Activated T-helper 2 cell treated with anti-CD3 and anti-CD28 coated beads, Interferon-gamma antibody, Interleukin-2, Interleukin-4, amounts not matched to agents 10 μg/mL and 5 μg/mL and 100 μg/mL, durations not matched to agents 14 hours and 24 hours and 36 hours (primary cell): ENCODE measurements at regions of chr16 and their contacts with region 1.

Region 1: DNA sequence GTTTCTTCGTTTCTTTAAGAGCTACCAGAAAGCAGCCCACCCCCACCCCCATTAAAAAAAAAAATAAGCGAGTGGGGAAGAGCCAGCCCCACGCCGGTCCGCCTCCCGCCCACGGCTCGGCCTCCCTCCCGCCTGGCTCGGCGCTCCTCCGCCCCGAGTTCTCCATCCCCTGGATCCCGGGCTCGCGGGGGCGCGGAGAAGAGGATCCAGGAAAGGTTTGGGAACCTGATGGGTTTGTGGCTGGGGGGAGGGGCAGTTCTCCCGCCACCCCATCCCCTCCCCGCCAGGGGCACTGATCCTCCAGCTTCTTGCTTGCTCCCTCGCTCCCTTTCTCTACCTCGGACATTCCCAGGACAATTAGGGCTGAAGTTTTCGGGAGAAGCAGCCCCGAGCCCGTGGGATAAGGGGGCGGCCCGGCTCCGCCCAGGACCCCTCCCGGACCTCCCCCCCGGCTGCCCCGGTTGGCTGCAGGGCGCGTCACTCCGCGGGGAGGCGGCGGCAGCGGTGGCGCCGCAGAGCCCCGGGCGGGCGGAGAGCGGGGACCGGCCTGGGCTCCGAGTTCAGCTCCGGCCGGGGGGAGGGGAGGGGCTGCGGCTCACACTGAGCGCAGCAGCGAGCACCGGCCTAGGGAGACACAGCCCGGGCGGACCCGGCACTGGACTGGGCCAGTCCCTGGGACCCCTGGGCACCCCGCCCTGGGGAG is 1.0 kb upstream of the SALL1 start:
- DNase-seq: no peak
- H3K4me3 Mint-ChIP-seq: no peak overlapping the region
- H3K27ac Mint-ChIP-seq: no peak overlapping the region
- H3K4me1 Mint-ChIP-seq: no peaks in the 10 kb centered on the region
- H3K27me3 Mint-ChIP-seq: peaks cover 69% of the 10 kb centered on the region

Region 2: GRCh38 chr16:49275050-49275730 is 1876.9 kb before region 1 on chr16:
- intact Hi-C with region 1: loop called (anchors 5 kb)
- DNase-seq: no peak
- H3K4me3 Mint-ChIP-seq: no peak overlapping the region
- H3K27ac Mint-ChIP-seq: no peak overlapping the region
- H3K4me1 Mint-ChIP-seq: no peaks in the 10 kb centered on the region
- H3K27me3 Mint-ChIP-seq: peaks cover 67% of the 10 kb centered on the region

Region 3: DNA sequence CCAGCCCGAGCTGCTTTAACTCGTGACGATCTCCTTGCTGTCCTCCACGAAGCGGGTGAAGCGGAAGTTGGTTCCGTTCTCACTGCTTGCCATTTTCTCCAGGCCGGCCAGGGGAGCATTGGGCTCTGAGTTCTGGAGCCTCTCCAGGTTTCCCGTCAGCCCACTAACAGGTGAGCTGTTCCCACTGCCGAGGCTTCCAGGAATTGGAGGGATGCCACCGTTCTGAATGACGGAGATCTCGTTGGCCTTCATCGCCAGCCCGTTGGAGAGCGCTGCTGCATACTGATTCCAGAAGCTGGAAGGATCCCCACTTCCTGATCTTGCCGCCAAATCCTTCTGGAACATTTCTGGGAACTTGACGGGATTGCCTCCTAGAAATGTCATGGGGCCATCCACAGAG is 15.0 kb before region 1 on chr16:
- intact Hi-C with region 1: no loop called
- DNase-seq: no peak
- H3K4me3 Mint-ChIP-seq: no peak overlapping the region
- H3K27ac Mint-ChIP-seq: no peak overlapping the region
- H3K4me1 Mint-ChIP-seq: no peaks in the 10 kb centered on the region
- H3K27me3 Mint-ChIP-seq: peaks cover 26% of the 10 kb centered on the region

Region 4: DNA sequence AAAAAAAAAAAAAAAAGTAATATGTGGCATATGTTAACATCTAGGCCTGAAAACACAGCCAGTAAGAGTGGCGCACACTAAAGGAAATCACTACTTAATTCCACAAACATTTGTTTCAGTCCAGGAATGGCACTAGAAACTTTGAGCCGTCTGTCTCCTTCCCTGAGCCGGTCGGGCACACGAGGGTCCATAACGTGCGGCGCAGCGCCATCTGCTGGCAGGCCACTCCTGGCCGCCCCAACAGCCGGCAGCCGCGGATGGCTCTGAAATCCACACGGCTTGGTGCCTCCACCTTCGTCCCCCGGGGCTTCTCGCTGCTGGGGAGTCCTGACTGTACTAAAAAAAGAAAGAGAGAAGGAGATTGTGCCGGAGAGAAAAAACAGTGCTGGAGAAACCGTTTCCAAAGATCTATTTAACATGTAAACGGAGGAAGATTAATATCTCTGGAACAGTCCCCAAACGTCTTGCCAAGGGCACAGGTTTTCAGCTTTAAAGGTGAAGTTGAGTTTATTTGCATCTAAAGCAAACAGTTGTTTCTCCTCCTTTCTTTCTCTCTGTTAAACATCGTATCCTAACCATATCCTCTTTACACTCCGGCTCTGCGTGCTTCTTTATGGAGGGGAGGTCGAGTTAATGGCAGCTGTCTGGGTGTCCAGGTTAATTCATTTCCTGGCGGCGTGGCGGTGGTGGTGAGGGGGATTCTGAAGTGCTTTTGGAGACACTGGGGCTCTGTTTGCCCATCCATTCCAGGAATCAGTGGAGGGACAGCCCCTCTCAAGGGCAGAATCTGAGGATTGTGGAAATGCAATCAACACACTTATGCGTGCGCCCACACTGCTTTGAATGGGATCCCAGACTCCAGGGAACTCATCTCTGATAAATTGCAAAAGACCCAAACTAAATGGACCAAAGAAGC is 610.2 kb after region 1 on chr16:
- intact Hi-C with region 1: loop called (anchors 10 kb)
- DNase-seq: peak; percentile 19
- H3K4me3 Mint-ChIP-seq: no peak overlapping the region
- H3K27ac Mint-ChIP-seq: no peak overlapping the region
- H3K4me1 Mint-ChIP-seq: no peaks in the 10 kb centered on the region
- H3K27me3 Mint-ChIP-seq: peaks cover 6% of the 10 kb centered on the region

Region 5: GRCh38 chr16:52547004-52547833 is 1395.1 kb after region 1 on chr16 and contains the start of gene TOX3:
- intact Hi-C with region 1: loop called (anchors 10 kb)
- DNase-seq: no peak
- H3K4me3 Mint-ChIP-seq: no peak within 1 kb of the TSS
- H3K27ac Mint-ChIP-seq: no peak within 1 kb of the TSS
- H3K4me1 Mint-ChIP-seq: no peaks in the 10 kb centered on the region
- H3K27me3 Mint-ChIP-seq: peaks cover 31% of the 10 kb centered on the region
- total RNA-seq, gene TOX3: not detected in 2 replicates